AG04449 (cell line): ENCODE measurements at regions of chr18 and their contacts with region 1.

Region 1: GRCh38 chr18:47997338-47997780 is 66.9 kb upstream of the SMAD2 start:
- DNase-seq: no peak
- H3K4me3 ChIP-seq: no peak overlapping the region
- CTCF ChIP-seq: peak; percentile 28

Region 2: DNA sequence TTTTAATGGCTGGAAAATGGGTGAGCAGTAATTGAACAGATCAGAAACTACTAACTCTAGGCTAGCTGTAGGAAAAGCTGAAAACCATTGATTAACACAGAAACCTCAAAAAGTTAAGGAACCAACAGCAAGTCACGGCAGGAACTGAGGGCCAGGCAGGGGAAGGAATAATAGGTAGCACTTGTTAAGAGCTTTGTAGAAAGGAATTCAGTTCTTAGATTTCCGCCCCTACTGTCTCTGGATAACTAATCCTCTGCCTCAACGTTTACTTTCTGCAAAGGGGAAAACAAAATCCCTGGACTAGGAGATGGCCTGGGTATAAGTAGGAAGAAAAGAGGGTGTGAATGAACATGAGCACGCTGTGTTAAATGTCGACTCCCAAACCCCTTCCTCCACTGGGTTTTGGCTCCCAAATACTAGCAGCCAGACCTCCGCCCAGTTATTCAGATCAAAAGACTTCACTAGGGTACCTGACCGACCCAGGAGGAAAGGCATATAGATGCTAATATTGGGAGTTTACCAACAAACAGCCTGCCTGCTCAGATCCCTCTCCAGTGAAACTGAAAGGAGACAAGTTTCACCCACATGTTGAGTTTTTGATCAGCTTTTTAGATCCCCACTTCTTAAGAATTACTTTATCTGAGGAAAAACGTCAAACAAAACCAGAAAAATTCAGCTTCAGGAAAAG is 79.3 kb before region 1 on chr18:
- CTCF ChIA-PET with region 1: no interaction called
- POLR2A ChIA-PET with region 1: no interaction called
- DNase-seq: no peak
- H3K4me3 ChIP-seq: no peak overlapping the region
- CTCF ChIP-seq: no peak

Region 3: DNA sequence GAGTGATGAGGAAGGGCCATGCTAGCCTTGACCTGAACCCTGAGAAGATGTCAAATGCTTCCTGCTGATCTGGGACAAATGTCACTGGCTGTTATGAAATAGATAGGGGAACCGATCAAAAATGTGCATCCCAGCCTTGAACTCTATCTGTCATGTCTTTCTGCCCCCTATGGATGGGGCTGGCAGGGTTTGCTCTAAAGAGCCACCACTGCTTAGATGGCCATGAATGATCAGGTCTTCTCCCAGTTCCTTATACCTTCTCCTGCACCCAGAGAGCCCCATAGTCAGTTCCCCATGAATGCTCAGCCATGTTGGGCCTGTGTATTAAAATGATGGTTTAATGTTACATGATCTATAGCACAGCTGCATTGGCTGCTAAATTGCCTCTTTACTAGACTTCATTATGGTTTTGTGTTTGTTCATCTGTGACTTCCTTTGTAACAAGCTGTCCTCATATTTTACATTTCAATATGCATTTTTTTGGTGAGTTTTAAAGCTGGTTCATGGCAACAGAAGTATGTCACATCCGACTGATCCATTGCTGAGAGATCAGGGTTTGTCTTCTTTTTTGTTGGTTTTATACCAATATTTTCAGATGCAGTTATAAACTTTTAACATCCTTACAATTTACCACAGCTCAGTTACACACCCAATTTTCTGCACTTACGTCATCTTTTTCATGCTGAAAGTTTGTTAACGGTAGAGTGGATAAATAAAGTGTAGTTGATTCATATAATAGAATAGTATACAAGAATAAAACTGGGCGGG is 10.6 kb before region 1 on chr18:
- CTCF ChIA-PET with region 1: no interaction called
- POLR2A ChIA-PET with region 1: no interaction called
- DNase-seq: no peak
- H3K4me3 ChIP-seq: no peak overlapping the region
- CTCF ChIP-seq: no peak

Region 4: DNA sequence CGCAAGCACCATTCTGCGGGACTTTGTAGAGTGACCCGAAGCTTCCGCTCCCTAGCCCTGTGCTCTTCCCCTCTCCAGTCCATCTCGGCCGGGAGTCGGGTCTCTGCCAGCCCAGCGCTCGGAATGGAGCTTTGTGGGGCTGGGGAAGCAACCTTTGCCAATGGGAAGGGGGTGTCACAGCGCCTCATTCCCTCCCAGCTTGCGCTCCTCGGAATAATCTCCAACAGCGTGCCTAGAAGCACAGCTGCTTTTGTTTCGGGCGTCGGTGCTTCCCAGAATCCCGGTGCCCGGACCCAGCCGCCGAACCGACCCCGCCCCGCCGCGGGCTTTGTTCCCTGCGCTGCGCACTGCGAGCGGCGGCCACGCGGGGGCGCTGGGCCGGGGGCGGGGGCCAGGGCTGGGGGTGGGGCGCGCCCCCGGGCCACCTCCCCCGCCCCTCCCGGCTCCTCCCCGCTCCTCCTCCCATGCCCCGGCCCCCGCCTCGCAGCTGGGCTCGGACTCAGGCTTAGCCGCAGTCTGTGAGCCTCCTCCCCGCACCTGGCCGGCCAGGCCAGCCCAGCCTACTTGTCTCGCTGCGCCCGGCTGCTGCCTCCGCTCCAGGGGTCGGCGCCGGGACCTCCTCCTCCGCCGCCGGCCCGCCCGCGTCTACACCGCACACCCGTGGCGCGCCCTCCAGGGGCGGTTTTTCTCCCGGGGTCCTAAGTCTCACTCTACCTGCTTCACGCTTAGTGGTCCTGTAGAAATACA is 10.8 kb after region 1 on chr18:
- CTCF ChIA-PET with region 1: interaction called, 11 read pairs
- POLR2A ChIA-PET with region 1: no interaction called
- DNase-seq: no peak
- H3K4me3 ChIP-seq: peak overlapping the region; percentile 55
- CTCF ChIP-seq: peak; percentile 46

Region 5: DNA sequence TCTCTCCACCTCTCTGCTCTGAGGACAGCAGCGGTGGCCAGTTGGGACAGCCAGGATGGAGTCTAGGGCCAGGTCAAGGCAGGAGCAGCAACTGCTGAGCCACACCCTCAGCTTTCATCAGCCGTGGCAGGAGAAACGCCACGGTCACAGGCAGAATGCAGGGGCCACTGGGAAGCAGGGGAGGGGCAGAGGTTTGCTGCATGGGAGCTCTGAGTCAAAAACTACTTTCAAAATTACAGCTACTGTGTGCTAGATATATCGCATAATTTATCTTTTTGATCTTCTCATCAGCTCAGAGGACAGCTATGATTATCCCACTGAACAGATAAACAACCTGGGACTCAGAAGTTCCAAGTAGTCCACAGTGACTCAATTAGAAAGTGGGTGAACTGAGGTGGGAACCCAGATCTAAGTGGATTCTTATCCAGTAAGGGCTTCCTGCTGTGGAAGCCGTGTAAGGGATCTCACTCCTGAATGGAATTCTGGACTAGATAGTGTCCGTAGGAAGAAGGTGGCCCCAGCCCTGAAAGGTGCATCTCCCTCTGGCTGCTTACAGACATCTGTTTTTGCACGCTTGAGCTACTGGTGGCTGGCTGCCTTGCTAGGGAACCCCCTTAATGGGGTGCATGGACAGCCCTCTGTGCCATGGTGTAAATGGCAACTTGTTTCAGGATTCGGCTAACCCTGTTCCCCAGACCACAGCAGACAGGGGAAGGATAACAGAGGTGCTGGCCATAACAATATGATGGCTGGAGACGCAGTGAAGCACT is 127.7 kb after region 1 on chr18:
- CTCF ChIA-PET with region 1: no interaction called
- POLR2A ChIA-PET with region 1: no interaction called
- DNase-seq: no peak
- H3K4me3 ChIP-seq: no peak overlapping the region
- CTCF ChIP-seq: no peak

Region 6: GRCh38 chr18:48502906-48503305 is 505.5 kb after region 1 on chr18:
- CTCF ChIA-PET with region 1: no interaction called
- POLR2A ChIA-PET with region 1: no interaction called
- DNase-seq: no peak
- H3K4me3 ChIP-seq: no peak overlapping the region
- CTCF ChIP-seq: no peak